Mammary epithelial cell (primary cell): ENCODE measurements at regions of chrX and their contacts with region 1.

Region 1: GRCh38 chrX:22110729-22111494 is 78.8 kb downstream of the PHEX start:
- DNase-seq: peak; percentile 52
- H3K4me3 ChIP-seq: no peak overlapping the region
- H3K27ac ChIP-seq: no peak overlapping the region
- H3K4me1 ChIP-seq: peaks cover 21% of the 10 kb centered on the region
- H3K27me3 ChIP-seq: no peaks in the 10 kb centered on the region
- CTCF ChIP-seq: no peak

Region 2: GRCh38 chrX:22122510-22122909 is 11.6 kb after region 1 on chrX:
- CTCF ChIA-PET with region 1: interaction called, 3 read pairs
- dilution Hi-C with region 1: no loop called
- in situ Hi-C with region 1: no loop called
- intact Hi-C with region 1: loop called (anchors 1 kb)
- DNase-seq: peak; percentile 97
- H3K4me3 ChIP-seq: no peak overlapping the region
- H3K27ac ChIP-seq: peak overlapping the region; percentile 91
- H3K4me1 ChIP-seq: peaks cover 54% of the 10 kb centered on the region
- H3K27me3 ChIP-seq: no peaks in the 10 kb centered on the region
- CTCF ChIP-seq: no peak